Panc1 (cell line): ENCODE measurements at regions of chrX and their contacts with region 1.

Region 1: GRCh38 chrX:123361371-123361770 is 177.3 kb downstream of the GRIA3 start:
- DNase-seq: no peak
- ATAC-seq: no peak
- H3K4me3 ChIP-seq: no peak overlapping the region
- H3K27ac ChIP-seq: no peak overlapping the region
- H3K4me1 ChIP-seq: no peaks in the 10 kb centered on the region
- H3K27me3 ChIP-seq: no peaks in the 10 kb centered on the region; the same call in 1 of the 2 replicates
- CTCF ChIP-seq: no peak

Region 2: GRCh38 chrX:123320622-123321021 is 40.7 kb before region 1 on chrX:
- CTCF ChIA-PET with region 1: no interaction called
- POLR2A ChIA-PET with region 1: no interaction called
- in situ Hi-C with region 1: no loop called
- intact Hi-C with region 1: no loop called
- DNase-seq: no peak
- ATAC-seq: no peak
- H3K4me3 ChIP-seq: no peak overlapping the region
- H3K27ac ChIP-seq: no peak overlapping the region
- H3K4me1 ChIP-seq: no peaks in the 10 kb centered on the region
- H3K27me3 ChIP-seq: no peaks in the 10 kb centered on the region
- CTCF ChIP-seq: no peak

Region 3: GRCh38 chrX:123339221-123339905 is 22.0 kb before region 1 on chrX:
- CTCF ChIA-PET with region 1: no interaction called
- POLR2A ChIA-PET with region 1: no interaction called
- in situ Hi-C with region 1: no loop called
- intact Hi-C with region 1: no loop called
- DNase-seq: no peak
- ATAC-seq: no peak
- H3K4me3 ChIP-seq: no peak overlapping the region
- H3K27ac ChIP-seq: no peak overlapping the region
- H3K4me1 ChIP-seq: no peaks in the 10 kb centered on the region
- H3K27me3 ChIP-seq: no peaks in the 10 kb centered on the region
- CTCF ChIP-seq: no peak

Region 4: DNA sequence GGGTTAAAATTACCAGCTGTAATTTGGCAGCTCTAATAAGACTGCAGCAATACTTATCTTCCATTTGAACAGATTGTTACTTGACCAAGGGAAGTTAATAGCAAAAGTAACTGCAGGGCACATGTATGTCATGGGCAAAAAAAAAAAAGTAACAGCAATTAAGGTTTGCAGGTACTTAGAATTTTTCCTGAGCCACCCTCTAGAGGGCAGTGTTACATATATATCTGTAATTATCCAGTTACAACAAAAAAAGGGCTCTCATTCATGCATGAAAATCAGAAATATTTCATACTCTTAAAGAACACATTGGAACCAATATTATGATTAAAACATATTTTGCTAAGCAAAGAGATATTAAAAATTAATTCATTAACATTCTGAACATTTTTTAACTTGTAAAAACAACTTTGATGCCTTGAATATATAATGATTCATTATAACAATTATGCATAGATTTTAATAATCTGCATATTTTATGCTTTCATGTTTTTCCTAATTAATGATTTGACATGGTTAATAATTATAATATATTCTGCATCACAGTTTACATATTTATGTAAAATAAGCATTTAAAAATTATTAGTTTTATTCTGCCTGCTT is 523.5 kb after region 1 on chrX:
- CTCF ChIA-PET with region 1: no interaction called
- POLR2A ChIA-PET with region 1: interaction called, 19 read pairs
- in situ Hi-C with region 1: no loop called
- intact Hi-C with region 1: no loop called
- DNase-seq: peak; percentile 10
- ATAC-seq: no peak; the same call in 1 of the 2 replicates
- H3K4me3 ChIP-seq: no peak overlapping the region
- H3K27ac ChIP-seq: no peak overlapping the region
- H3K4me1 ChIP-seq: no peaks in the 10 kb centered on the region; the same call in 1 of the 2 replicates
- H3K27me3 ChIP-seq: no peaks in the 10 kb centered on the region
- CTCF ChIP-seq: no peak; the same call in 1 of the 2 replicates

Region 5: DNA sequence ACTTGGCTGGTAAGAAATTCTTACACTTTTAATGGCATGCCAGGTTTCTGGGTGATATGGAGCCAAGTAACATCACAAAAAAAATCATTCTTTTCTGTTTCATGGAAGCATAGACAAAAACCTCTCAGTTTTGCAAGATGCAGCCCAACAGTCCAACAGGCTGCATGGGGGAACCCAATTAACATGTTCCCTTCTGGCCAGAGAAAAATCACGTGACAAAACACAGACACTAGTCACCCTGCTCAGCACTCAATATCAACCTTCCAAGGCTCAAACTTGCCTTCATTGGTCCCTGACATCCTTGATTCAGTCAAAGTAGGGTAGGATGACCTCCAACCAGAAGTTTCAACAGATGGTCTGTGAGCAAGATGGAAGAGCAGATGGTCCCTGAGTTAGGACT is 801.8 kb after region 1 on chrX:
- CTCF ChIA-PET with region 1: no interaction called
- POLR2A ChIA-PET with region 1: no interaction called
- in situ Hi-C with region 1: no loop called
- intact Hi-C with region 1: no loop called
- DNase-seq: no peak
- ATAC-seq: no peak
- H3K4me3 ChIP-seq: no peak overlapping the region
- H3K27ac ChIP-seq: no peak overlapping the region
- H3K4me1 ChIP-seq: no peaks in the 10 kb centered on the region
- H3K27me3 ChIP-seq: no peaks in the 10 kb centered on the region
- CTCF ChIP-seq: no peak